ENCODE measurements at regions of chr5 and their contacts with region 1.

Region 1: DNA sequence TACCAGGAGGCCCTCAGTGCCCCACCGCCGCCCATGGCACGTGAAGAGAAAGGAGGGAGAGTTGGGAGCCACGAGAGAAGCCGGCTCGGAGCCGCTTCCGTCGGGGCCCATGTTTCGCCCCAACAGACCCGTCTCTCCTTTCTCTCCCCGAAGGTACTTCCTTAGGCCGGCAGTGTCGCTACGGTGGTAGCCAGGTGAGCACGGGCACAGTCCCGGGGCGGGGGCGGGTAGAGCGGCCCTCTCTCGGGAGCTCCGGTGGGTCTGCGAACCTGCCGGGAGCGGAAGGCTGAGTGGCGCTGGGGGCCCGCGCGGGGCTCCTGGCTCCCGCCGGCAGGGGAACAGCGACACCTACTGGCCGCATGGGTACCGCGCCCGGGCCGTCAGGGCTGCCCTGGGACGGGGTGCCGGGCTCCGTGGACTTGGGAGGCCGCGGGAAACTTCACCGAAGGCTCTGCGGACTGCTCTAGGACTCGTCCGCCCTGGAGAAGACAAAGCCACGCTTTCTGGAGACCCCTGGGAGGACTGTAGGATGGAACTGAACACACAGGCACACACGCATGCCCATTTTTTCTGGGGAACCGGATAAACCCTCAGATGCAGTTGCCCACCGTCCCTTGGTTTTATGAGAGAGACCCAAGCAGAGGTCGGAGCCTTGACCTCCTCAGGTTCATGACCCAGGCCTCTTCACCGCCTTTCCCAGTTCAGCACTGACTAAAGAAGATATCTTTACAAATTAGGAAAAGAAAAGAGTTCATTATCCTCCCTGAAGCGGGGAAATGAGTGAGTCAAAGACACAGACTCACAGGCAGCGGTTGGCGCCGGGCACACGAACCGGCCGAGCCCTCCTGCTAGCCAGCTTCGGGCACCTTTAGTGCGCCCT is 202.5 kb downstream of the MEF2C start:
- DNase-seq: peak in 1 of 2 donors; percentile 94
- H3K4me3 ChIP-seq: peak overlapping the region; percentile 8
- CTCF ChIP-seq: peak in 1 of 3 donors; percentile 30
- POLR2A ChIP-seq: no peak

Region 2: GRCh38 chr5:87780831-87781760 is 899.4 kb before region 1 on chr5:
- intact Hi-C with region 1: loop called (anchors 5 kb)
- DNase-seq: peak; percentile 49 to 89
- H3K4me3 ChIP-seq: no peak overlapping the region
- CTCF ChIP-seq: no peak
- POLR2A ChIP-seq: no peak

Region 3: DNA sequence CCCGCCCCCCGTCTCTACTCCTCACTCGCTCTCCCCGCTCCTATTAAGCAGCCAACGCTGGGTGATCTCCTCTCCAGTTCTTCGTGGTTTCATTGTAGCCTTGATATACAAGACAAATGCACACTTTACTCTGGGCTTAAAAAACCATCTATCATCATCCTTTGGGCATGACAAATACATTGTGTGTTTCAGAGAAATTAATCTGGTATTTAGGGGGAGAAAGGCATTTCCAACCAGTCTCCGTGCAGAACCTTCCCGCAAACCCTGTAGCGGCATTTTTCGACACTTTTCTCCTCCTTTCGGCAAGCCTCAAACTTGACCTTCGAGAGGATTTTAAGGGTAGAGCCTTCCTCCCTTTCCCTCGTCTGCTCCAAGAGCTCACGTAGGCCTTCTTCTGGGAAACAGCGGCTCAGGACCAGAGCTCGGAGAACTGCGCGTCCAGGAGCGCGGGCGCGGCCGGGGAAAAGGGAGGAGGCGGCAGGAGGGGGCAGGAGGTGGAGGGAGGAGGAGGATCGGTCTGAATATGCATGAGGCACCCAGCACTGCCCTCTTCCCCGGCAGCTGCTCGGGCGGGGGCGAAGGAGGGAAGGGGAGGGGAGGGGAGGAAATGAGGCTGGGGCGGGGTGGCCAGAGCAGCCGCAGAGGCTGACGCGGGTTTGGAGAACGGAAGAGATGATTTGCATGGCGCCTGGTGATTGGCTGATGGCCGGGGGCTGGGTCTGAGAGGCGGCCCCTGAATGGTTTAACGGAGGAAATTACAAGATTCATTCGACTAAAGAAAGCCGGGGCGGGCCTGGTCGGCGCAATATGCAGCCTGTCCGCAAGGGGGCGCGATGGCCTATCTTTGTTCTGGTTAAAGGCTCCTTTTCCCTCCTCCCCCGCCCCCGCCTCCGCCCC is 539.4 kb before region 1 on chr5:
- intact Hi-C with region 1: loop called (anchors 10 kb)
- DNase-seq: peak; percentile 97 to 99
- H3K4me3 ChIP-seq: peak overlapping the region; percentile 22
- CTCF ChIP-seq: no peak
- POLR2A ChIP-seq: no peak